ENCODE measurements at regions of chr1 and their contacts with region 1.

Region 1: GRCh38 chr1:186325239-186325638 is 49.8 kb downstream of the TPR start:
- DNase-seq: peak in 4 of 14 experiments; percentile 26 to 59 (median 52)
- ATAC-seq: peak; percentile 76
- H3K4me3 ChIP-seq: no peak overlapping the region
- H3K4me3 Mint-ChIP-seq: no peak overlapping the region
- H3K27ac ChIP-seq: no peak overlapping the region
- H3K27ac Mint-ChIP-seq: peak overlapping the region; percentile 16
- H3K4me1 ChIP-seq: no peaks in the 10 kb centered on the region
- H3K4me1 Mint-ChIP-seq: peaks cover 31% of the 10 kb centered on the region
- H3K27me3 ChIP-seq: no peaks in the 10 kb centered on the region
- H3K27me3 Mint-ChIP-seq: no peaks in the 10 kb centered on the region
- CTCF ChIP-seq: peak; percentile 63

Region 2: DNA sequence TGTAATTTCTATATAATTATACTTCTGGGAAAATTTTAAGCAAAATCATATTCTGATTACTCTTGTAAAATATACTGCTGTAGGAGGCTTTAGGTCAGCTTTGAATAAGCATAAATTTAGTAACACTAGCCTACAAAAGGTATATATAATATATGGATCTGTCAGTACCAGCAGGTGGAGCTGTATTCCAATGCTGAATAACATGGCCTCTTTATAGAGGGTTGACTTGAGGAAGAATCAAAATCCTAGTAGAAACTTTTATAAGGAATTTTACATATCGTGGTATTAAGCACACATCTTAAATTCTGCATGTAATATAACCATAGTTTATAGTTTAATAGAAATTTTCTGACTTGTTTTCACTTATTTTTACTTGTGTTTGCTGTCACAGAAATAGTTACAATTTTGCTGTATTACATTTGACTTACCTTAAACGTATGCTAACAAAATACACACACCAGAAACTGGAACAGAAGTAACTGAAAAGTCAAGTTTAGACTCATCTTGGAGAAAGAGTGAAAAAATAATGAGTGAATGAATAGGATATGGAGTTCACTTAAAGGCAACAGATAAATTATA is 511.7 kb before region 1 on chr1:
- CTCF ChIA-PET with region 1: no interaction called
- POLR2A ChIA-PET with region 1: no interaction called
- intact Hi-C with region 1: loop called in 1 of 2 experiments (anchors 10 kb)
- DNase-seq: peak in 3 of 14 experiments; percentile 20 to 32 (median 26)
- ATAC-seq: no peak
- H3K4me3 ChIP-seq: no peak overlapping the region
- H3K4me3 Mint-ChIP-seq: no peak overlapping the region
- H3K27ac ChIP-seq: no peak overlapping the region
- H3K27ac Mint-ChIP-seq: no peak overlapping the region
- H3K4me1 ChIP-seq: no peaks in the 10 kb centered on the region
- H3K4me1 Mint-ChIP-seq: no peaks in the 10 kb centered on the region
- H3K27me3 ChIP-seq: no peaks in the 10 kb centered on the region
- H3K27me3 Mint-ChIP-seq: peaks cover 15% of the 10 kb centered on the region
- CTCF ChIP-seq: peak; percentile 53

Region 3: DNA sequence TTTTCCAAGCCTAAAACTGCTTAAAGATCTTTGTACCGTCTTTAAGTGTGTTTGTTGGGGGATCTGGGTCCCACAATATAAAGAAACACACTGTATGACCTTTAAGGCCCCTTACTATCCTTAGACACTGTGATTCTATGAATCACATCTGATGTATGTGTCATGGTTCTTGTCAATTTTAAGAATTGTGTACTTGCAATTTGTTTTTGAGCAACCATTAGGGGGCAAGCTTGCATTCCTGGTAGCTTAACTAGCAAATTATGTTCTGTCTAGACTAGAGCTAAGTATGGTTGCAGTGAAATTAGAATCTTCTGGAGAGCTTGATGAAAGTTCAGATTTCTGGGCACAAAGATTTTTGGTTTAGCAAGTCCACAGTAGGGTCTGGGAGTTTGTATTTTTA is 169.6 kb before region 1 on chr1:
- CTCF ChIA-PET with region 1: no interaction called
- POLR2A ChIA-PET with region 1: no interaction called
- intact Hi-C with region 1: loop called in 1 of 2 experiments (anchors 10 kb)
- DNase-seq: peak in 3 of 14 experiments; percentile 11 to 18 (median 15)
- ATAC-seq: no peak
- H3K4me3 ChIP-seq: no peak overlapping the region
- H3K4me3 Mint-ChIP-seq: no peak overlapping the region
- H3K27ac ChIP-seq: no peak overlapping the region
- H3K27ac Mint-ChIP-seq: no peak overlapping the region
- H3K4me1 ChIP-seq: no peaks in the 10 kb centered on the region
- H3K4me1 Mint-ChIP-seq: no peaks in the 10 kb centered on the region
- H3K27me3 ChIP-seq: no peaks in the 10 kb centered on the region
- H3K27me3 Mint-ChIP-seq: peaks cover 4% of the 10 kb centered on the region
- CTCF ChIP-seq: peak; percentile 15

Region 4: DNA sequence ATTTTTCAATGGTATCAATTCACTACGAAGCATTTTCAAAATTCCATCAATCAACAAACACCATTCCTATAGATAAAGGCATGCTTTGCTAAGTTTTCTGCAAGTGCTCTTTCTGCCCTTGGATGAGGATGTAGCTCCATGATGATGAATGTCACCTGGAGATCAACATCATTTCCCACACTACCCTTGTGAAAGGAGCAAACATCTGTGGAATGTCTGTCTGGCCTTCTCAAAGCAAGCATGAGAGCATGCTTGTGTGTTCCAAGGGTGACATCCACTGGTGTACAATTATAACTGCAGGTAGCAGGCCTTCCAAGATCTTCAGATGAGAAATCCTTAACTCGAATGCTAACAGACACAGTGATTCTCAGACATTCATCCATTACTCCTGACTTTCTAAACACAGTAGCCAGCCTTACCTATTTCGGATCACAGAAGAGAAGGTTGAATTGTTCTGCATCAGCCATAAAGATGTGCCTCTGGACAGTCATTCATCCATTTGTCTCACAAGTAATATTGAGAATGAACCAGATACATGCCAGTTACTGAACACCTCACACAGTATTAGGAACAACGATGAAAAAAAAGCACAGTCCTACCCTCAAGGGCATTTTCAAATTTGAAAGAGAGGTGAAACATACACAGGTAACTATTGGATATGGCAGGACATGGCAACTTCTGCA is 112.6 kb before region 1 on chr1:
- CTCF ChIA-PET with region 1: no interaction called
- POLR2A ChIA-PET with region 1: no interaction called
- intact Hi-C with region 1: no loop called
- DNase-seq: peak in 4 of 14 experiments; percentile 8 to 57 (median 42)
- ATAC-seq: no peak
- H3K4me3 ChIP-seq: no peak overlapping the region
- H3K4me3 Mint-ChIP-seq: no peak overlapping the region
- H3K27ac ChIP-seq: no peak overlapping the region
- H3K27ac Mint-ChIP-seq: no peak overlapping the region
- H3K4me1 ChIP-seq: no peaks in the 10 kb centered on the region
- H3K4me1 Mint-ChIP-seq: no peaks in the 10 kb centered on the region
- H3K27me3 ChIP-seq: peaks cover 0 to 11% of the 10 kb centered on the region in 2 experiments
- H3K27me3 Mint-ChIP-seq: peaks cover 58% of the 10 kb centered on the region
- CTCF ChIP-seq: peak; percentile 23

Region 5: DNA sequence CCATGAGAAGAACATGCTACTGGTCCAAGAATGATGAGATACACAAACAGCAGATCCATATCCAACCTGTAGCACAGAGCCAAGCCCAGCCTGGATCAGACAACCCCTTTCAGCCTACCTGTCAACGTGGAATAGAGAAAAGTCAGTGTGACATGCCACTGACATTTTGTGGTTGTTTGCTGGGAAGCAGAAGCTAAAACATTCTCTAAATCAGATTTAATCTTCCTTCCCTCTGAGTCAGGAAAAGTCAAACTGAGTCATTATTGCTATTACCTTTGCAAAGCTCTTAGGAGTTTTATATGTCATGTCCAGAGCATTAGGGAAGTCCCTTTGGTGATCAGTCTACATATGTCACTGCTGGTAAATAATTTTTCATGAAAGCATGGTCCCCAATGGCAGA is 93.3 kb before region 1 on chr1:
- CTCF ChIA-PET with region 1: no interaction called
- POLR2A ChIA-PET with region 1: no interaction called
- intact Hi-C with region 1: no loop called
- DNase-seq: no peak
- ATAC-seq: no peak
- H3K4me3 ChIP-seq: no peak overlapping the region
- H3K4me3 Mint-ChIP-seq: no peak overlapping the region
- H3K27ac ChIP-seq: no peak overlapping the region
- H3K27ac Mint-ChIP-seq: no peak overlapping the region
- H3K4me1 ChIP-seq: no peaks in the 10 kb centered on the region
- H3K4me1 Mint-ChIP-seq: no peaks in the 10 kb centered on the region
- H3K27me3 ChIP-seq: no peaks in the 10 kb centered on the region
- H3K27me3 Mint-ChIP-seq: peaks cover 34% of the 10 kb centered on the region
- CTCF ChIP-seq: no peak

Region 6: GRCh38 chr1:186272486-186272885 is 52.8 kb before region 1 on chr1:
- CTCF ChIA-PET with region 1: interaction called, 3 read pairs
- POLR2A ChIA-PET with region 1: interaction called, 3 read pairs
- intact Hi-C with region 1: loop called (anchors 1 to 2 kb)
- DNase-seq: peak in 3 of 14 experiments; percentile 25 to 46 (median 41)
- ATAC-seq: peak; percentile 48
- H3K4me3 ChIP-seq: no peak overlapping the region
- H3K4me3 Mint-ChIP-seq: no peak overlapping the region
- H3K27ac ChIP-seq: no peak overlapping the region
- H3K27ac Mint-ChIP-seq: no peak overlapping the region
- H3K4me1 ChIP-seq: no peaks in the 10 kb centered on the region
- H3K4me1 Mint-ChIP-seq: peaks cover 10% of the 10 kb centered on the region
- H3K27me3 ChIP-seq: no peaks in the 10 kb centered on the region
- H3K27me3 Mint-ChIP-seq: no peaks in the 10 kb centered on the region
- CTCF ChIP-seq: peak; percentile 67

Region 7: DNA sequence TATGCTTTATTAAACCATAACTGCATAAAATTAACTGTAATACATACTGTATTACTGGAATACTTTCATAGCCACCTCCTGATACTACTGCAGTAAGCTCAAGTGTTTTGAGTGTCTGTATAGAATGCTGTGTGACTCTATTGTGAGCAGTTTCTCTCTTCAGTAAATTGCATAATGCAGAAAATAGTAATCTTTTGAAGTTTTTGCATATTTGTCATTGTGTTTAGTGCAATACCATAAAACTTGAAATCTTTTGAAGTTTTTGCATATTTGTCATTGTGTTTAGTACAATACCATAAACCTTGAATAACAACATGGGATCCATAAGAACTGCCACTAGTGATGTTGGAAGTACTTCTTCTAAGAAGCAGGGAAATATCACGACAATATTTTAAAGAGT is 38.7 kb after region 1 on chr1:
- CTCF ChIA-PET with region 1: interaction called, 5 read pairs
- POLR2A ChIA-PET with region 1: no interaction called
- intact Hi-C with region 1: loop called in 1 of 2 experiments (anchors 5 kb)
- DNase-seq: no peak
- ATAC-seq: no peak
- H3K4me3 ChIP-seq: no peak overlapping the region
- H3K4me3 Mint-ChIP-seq: no peak overlapping the region
- H3K27ac ChIP-seq: no peak overlapping the region
- H3K27ac Mint-ChIP-seq: no peak overlapping the region
- H3K4me1 ChIP-seq: no peaks in the 10 kb centered on the region
- H3K4me1 Mint-ChIP-seq: peaks cover 15% of the 10 kb centered on the region
- H3K27me3 ChIP-seq: no peaks in the 10 kb centered on the region
- H3K27me3 Mint-ChIP-seq: no peaks in the 10 kb centered on the region
- CTCF ChIP-seq: no peak

Measured in CD4-positive, alpha-beta T cell (primary cell).